ENCODE measurements at regions of chr2 and their contacts with region 1.

Region 1: DNA sequence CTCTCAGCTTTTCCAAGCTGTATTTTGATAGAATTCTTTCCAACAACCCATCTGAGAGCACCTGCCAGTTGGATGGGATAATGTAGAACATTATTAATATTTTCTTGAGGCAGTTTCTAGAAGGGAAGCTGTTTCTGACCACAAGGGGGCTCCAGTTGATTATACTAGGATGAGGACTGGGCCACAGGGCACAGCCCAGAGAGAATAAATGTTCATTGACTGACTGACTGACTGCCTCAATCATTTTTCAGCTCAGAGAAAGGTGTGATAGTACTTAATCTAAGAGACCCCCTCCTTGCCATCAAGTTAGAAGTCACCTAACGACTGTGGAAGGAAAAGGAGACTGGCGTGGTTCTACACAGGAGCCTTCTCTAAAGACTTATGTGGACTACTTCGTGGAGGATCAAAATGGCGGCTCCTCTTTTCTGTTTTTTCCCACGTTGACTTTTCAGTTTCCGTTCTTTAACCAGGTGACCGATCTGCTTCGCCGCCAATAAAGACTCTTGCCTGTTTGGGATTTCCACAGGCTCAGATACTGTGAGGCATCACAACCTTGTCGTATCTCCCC is 31.9 kb upstream of the CREG2 start:
- DNase-seq: peak; percentile 79
- ATAC-seq: peak; percentile 82
- H3K4me3 Mint-ChIP-seq: no peak overlapping the region
- H3K27ac Mint-ChIP-seq: no peak overlapping the region
- H3K4me1 Mint-ChIP-seq: no peaks in the 10 kb centered on the region
- H3K27me3 Mint-ChIP-seq: no peaks in the 10 kb centered on the region
- CTCF ChIP-seq: peak; percentile 69

Region 2: DNA sequence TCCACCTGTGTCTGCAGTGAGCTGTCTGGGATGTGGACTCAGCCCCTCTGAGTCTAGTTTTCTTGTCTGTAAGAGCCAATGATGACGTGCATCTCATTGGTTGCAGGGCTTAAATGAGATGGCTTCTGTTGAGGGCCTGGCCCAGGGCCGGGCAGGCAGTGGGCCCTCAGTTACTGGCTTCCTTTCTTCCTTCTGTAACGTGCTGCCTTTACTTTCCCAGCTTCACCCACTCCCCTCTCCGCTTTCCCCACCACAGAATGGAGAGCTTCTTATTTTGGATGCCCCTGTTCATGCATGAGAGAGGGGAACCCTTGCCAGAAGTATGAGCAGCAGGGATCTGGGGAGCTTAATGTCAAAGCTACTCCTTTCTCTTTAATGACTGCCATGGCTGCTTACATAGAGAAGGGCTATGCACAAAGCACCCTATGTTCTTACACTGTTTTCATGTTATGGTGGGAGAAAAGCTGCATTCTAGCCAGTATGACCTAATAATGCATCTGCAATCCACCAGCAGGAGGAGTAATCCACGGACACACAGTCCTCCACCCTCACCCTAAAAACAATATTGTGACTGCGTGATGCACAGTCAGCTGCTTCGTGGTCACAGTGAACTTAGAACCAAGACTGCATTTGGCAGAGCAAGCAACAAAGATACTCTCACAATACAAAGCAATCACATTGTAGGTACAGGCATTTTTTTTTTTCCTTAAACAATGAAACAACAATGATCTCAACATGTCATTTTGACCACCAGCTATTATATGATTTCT is 69.1 kb before region 1 on chr2:
- CTCF ChIA-PET with region 1: interaction called, 10 read pairs
- POLR2A ChIA-PET with region 1: no interaction called
- intact Hi-C with region 1: no loop called
- DNase-seq: no peak
- ATAC-seq: no peak
- H3K4me3 Mint-ChIP-seq: no peak overlapping the region
- H3K27ac Mint-ChIP-seq: no peak overlapping the region
- H3K4me1 Mint-ChIP-seq: peaks cover 3% of the 10 kb centered on the region
- H3K27me3 Mint-ChIP-seq: no peaks in the 10 kb centered on the region
- CTCF ChIP-seq: no peak

Region 3: DNA sequence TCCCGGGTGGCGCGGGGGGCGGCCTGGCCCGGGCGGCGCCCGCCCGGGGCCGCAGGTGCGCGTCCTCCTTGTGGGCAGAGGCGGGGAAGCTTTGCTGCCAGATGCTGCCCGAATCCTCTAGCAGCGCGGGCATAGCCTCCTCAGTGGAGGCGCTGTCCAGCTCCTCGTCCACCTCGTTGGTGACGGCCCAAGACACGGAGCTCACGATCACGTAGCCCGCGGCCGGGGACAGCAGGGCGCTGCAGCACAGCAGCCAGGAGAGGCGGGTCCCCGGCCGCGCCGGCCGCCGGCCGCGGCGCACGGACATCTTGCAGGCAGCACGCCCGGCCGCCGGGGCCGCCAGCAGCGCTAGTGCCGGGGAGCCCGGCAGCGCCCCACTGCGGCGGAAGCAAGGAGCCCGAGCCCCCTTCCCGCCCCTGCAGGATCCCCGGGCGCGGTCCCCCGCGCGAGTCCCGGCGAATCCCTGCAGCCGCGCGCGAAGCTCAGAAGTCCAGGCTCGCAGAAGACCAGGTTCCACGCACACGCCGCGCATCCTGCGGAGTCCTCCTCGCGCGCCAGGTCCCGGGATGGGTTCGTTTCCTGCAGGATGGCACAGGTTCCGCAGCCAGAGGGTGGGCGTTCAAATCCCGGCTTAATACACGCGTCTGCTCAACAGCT is 31.9 kb before region 1 on chr2 and contains the start of gene CREG2:
- CTCF ChIA-PET with region 1: interaction called, 14 read pairs
- POLR2A ChIA-PET with region 1: no interaction called
- intact Hi-C with region 1: no loop called
- DNase-seq: peak; percentile 69
- ATAC-seq: peak; percentile 96
- H3K4me3 Mint-ChIP-seq: peak within 1 kb of the TSS; percentile 56
- H3K27ac Mint-ChIP-seq: no peak within 1 kb of the TSS
- H3K4me1 Mint-ChIP-seq: peaks cover 5% of the 10 kb centered on the region
- H3K27me3 Mint-ChIP-seq: peaks cover 36% of the 10 kb centered on the region
- CTCF ChIP-seq: peak; percentile 78
- total RNA-seq, gene CREG2: not detected

Region 4: GRCh38 chr2:101432411-101433181 is 13.4 kb after region 1 on chr2:
- CTCF ChIA-PET with region 1: interaction called, 10 read pairs
- POLR2A ChIA-PET with region 1: no interaction called
- intact Hi-C with region 1: no loop called
- DNase-seq: no peak
- ATAC-seq: no peak
- H3K4me3 Mint-ChIP-seq: no peak overlapping the region
- H3K27ac Mint-ChIP-seq: no peak overlapping the region
- H3K4me1 Mint-ChIP-seq: no peaks in the 10 kb centered on the region
- H3K27me3 Mint-ChIP-seq: no peaks in the 10 kb centered on the region
- CTCF ChIP-seq: no peak

Region 5: GRCh38 chr2:101473911-101474701 is 54.9 kb after region 1 on chr2:
- CTCF ChIA-PET with region 1: interaction called, 10 read pairs
- POLR2A ChIA-PET with region 1: no interaction called
- intact Hi-C with region 1: no loop called
- DNase-seq: peak; percentile 58
- ATAC-seq: peak; percentile 45
- H3K4me3 Mint-ChIP-seq: peak overlapping the region; percentile 77
- H3K27ac Mint-ChIP-seq: peak overlapping the region; percentile 64
- H3K4me1 Mint-ChIP-seq: peaks cover 11% of the 10 kb centered on the region
- H3K27me3 Mint-ChIP-seq: peaks cover 8% of the 10 kb centered on the region
- CTCF ChIP-seq: no peak

Region 6: DNA sequence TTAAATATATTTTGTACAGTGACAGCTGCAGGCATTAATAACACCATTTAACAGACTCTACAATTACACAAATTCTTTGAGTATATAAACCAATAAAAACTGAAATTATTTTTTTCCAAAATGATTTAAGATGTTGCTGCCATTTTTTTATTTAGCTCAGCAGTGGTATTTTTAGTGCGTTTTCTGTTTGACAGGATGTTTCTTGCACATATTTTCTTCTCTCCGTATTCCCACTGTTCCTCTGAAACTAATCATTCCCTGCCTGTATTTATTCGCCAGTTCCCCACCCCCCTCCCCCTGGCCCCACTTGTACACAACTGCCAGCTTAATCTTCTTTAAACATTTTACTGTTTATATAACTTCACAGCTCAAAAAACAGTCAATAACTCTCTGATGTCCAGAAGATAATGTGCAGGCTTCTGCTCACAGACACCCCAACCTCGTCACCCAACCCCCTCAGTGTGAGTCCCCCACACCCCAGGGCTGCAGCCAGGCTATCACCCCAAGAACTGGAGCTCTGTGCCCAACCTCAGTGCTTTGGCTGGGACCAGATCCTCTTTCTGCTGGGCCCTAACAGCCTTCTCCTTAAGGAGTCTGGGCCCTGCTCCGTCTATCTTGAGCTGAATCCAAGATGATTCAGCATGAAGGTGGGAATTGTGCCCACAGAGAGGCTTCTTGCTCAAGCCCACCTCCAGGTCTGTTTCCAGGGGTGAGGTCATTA is 236.7 kb after region 1 on chr2:
- CTCF ChIA-PET with region 1: no interaction called
- POLR2A ChIA-PET with region 1: no interaction called
- intact Hi-C with region 1: loop called (anchors 10 kb)
- DNase-seq: no peak
- ATAC-seq: no peak
- H3K4me3 Mint-ChIP-seq: no peak overlapping the region
- H3K27ac Mint-ChIP-seq: no peak overlapping the region
- H3K4me1 Mint-ChIP-seq: peaks cover 17% of the 10 kb centered on the region
- H3K27me3 Mint-ChIP-seq: no peaks in the 10 kb centered on the region
- CTCF ChIP-seq: no peak

Measured in activated CD8-positive, alpha-beta T cell treated with anti-CD3 and anti-CD28 coated beads for 36 hours (primary cell).